ENCODE measurements at regions of chr15 and their contacts with region 1.

Region 1: DNA sequence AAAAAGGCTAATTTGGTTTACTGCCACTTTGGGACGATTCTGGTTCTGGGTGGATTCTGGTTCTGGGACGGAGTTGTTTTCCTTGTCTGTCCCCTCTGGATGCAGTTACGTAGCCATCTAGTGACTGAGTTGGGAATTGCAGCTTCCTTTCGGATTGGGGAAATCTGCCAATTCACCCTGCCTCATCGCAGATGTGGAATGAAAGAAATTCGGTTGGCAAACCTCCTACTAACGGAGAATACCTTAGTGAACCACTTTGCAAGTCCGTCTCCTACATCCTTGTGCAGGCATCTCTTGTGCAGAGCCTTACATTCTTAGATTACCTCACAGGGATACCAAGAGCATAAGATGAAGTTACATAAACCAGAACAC is 31.5 kb upstream of the AP4E1 start:
- DNase-seq: peak; percentile 85
- H3K4me3 Mint-ChIP-seq: peak overlapping the region; percentile 75
- H3K27ac Mint-ChIP-seq: peak overlapping the region; percentile 46
- H3K4me1 Mint-ChIP-seq: peaks cover 53% of the 10 kb centered on the region
- H3K27me3 Mint-ChIP-seq: peaks cover 4% of the 10 kb centered on the region

Region 2: DNA sequence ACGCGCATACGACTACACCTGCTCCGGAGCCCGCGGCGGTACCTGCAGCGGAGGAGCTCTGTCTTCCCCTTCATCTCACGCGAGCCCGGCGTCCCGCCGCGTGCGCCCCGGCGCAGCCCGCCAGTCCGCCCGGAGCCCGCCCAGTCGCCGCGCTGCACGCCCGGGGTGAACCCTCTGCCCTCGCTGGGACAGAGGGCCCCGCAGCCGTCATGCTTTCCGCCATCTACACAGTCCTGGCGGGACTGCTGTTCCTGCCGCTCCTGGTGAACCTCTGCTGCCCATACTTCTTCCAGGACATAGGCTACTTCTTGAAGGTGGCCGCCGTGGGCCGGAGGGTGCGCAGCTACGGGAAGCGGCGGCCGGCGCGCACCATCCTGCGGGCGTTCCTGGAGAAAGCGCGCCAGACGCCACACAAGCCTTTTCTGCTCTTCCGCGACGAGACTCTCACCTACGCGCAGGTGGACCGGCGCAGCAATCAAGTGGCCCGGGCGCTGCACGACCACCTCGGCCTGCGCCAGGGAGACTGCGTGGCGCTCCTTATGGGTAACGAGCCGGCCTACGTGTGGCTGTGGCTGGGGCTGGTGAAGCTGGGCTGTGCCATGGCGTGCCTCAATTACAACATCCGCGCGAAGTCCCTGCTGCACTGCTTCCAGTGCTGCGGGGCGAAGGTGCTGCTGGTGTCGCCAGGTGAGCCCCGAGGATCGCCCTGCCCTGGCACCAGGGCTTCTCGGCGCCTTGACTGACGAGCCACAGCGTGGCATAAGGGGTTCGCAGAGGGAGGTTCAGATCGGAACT is 694.6 kb before region 1 on chr15:
- CTCF ChIA-PET with region 1: no interaction called
- intact Hi-C with region 1: loop called (anchors 2 kb)
- DNase-seq: peak; percentile 73
- H3K4me3 Mint-ChIP-seq: peak overlapping the region; percentile 98
- H3K27ac Mint-ChIP-seq: peak overlapping the region; percentile 87
- H3K4me1 Mint-ChIP-seq: peaks cover 29% of the 10 kb centered on the region
- H3K27me3 Mint-ChIP-seq: peaks cover 25% of the 10 kb centered on the region

Region 3: DNA sequence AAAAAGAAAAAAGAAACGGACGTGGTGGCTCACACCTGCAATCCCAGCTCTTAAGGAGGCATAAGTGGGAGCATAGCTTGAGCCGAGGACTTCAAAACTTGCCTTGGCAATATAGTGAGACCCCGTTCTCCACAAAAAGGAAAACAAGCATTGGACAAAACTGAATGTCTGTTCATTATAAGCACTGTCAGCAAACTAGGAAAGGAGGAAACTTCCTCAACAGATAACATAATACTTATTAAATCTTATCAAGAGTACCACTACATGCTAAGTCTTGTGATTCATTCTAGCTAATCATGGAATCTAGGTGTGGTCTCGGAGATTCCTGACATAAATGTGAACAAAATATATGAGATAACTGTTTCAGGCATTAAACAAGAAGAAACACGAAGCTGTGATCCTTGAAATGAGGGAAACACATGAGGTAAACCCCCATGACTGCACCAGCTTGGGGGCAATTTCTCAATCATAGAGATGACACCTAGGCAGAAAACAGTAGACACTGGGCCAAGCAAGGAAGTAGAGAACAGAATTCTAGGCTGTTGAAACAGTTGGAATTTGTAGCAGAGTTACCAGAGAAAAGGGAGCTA is 223.7 kb before region 1 on chr15:
- CTCF ChIA-PET with region 1: interaction called, 7 read pairs
- intact Hi-C with region 1: loop called (anchors 1 kb)
- DNase-seq: no peak
- H3K4me3 Mint-ChIP-seq: no peak overlapping the region
- H3K27ac Mint-ChIP-seq: peak overlapping the region; percentile 47
- H3K4me1 Mint-ChIP-seq: peaks cover 19% of the 10 kb centered on the region
- H3K27me3 Mint-ChIP-seq: no peaks in the 10 kb centered on the region

Region 4: DNA sequence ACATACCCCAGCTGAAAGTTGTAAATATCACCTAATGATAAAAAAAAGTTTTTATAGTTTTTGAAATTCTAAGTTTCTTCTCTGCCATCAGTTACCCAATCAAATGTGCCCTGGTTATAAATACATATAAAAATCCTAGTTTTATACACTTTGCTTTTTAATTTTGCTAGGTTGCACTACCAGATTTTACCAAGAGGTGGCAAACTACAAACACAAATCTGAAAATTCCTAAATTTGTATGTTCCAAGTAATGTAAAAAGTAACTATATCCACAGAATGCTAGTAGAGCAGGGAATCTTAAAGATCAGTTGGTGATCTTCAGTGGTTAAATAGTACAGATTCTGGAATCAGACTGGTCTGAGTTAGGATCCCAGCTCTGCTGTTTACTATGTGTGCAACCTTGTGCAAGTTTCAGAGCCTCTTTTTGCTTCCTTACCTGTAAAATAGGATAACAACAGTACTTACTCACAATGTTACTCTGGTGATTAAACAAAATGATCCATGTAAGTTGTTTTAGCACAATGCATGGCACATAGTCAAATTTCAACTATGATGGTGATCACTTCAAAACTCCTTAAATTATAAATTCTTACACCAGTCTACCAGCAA is 201.3 kb before region 1 on chr15:
- CTCF ChIA-PET with region 1: interaction called, 22 read pairs
- intact Hi-C with region 1: loop called (anchors 1 kb)
- DNase-seq: no peak
- H3K4me3 Mint-ChIP-seq: no peak overlapping the region
- H3K27ac Mint-ChIP-seq: no peak overlapping the region
- H3K4me1 Mint-ChIP-seq: peaks cover 31% of the 10 kb centered on the region
- H3K27me3 Mint-ChIP-seq: no peaks in the 10 kb centered on the region

Region 5: GRCh38 chr15:50810128-50810527 is 66.8 kb before region 1 on chr15:
- CTCF ChIA-PET with region 1: no interaction called
- intact Hi-C with region 1: no loop called
- DNase-seq: no peak
- H3K4me3 Mint-ChIP-seq: no peak overlapping the region
- H3K27ac Mint-ChIP-seq: no peak overlapping the region
- H3K4me1 Mint-ChIP-seq: no peaks in the 10 kb centered on the region
- H3K27me3 Mint-ChIP-seq: peaks cover 2% of the 10 kb centered on the region

Region 6: GRCh38 chr15:50865515-50866353 is 11.2 kb before region 1 on chr15:
- CTCF ChIA-PET with region 1: interaction called, 11 read pairs
- intact Hi-C with region 1: no loop called
- DNase-seq: no peak
- H3K4me3 Mint-ChIP-seq: no peak overlapping the region
- H3K27ac Mint-ChIP-seq: no peak overlapping the region
- H3K4me1 Mint-ChIP-seq: no peaks in the 10 kb centered on the region
- H3K27me3 Mint-ChIP-seq: no peaks in the 10 kb centered on the region

Measured in activated naive CD4-positive, alpha-beta T cell treated with anti-CD3 and anti-CD28 coated beads for 36 hours (primary cell).